Activated CD8-positive, alpha-beta T cell treated with anti-CD3 and anti-CD28 coated beads for 36 hours (primary cell): ENCODE measurements at regions of chr17 and their contacts with region 1.

Region 1: GRCh38 chr17:50139950-50140871 is 10.3 kb upstream of the SAMD14 start:
- DNase-seq: peak; percentile 87
- ATAC-seq: peak; percentile 90
- H3K4me3 Mint-ChIP-seq: no peak overlapping the region
- H3K27ac Mint-ChIP-seq: peak overlapping the region; percentile 61
- H3K4me1 Mint-ChIP-seq: peaks cover 53% of the 10 kb centered on the region
- H3K27me3 Mint-ChIP-seq: no peaks in the 10 kb centered on the region
- CTCF ChIP-seq: peak; percentile 94

Region 2: DNA sequence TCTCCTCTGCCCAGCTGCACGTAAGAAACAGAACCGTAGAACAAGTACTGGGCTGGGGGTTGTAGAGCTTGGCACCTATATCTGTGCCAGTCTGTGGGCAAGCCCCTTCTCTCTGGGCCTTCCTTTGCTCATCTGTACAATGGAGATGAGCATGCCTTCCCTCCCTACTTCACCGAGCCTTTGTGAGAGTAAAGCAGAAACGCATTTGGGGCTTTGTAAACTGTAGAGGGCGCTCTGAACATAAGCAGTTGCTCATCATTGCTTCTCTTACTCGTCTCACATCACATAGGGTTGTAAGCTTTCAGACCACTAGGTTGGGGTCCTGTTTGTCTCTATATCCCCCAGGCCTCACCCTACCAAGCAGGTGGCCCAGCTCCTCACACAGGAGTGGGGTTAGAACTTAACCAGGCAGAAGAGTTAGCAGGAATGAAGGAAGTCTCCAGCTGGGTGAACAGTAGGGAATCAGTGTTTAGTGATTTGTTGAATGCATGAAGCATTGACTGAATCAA is 25.3 kb before region 1 on chr17:
- CTCF ChIA-PET with region 1: interaction called, 29 read pairs
- POLR2A ChIA-PET with region 1: interaction called, 3 read pairs
- intact Hi-C with region 1: no loop called
- DNase-seq: peak; percentile 75
- ATAC-seq: peak; percentile 69
- H3K4me3 Mint-ChIP-seq: no peak overlapping the region
- H3K27ac Mint-ChIP-seq: no peak overlapping the region
- H3K4me1 Mint-ChIP-seq: peaks cover 12% of the 10 kb centered on the region
- H3K27me3 Mint-ChIP-seq: peaks cover 29% of the 10 kb centered on the region
- CTCF ChIP-seq: peak; percentile 63

Region 3: GRCh38 chr17:50129728-50130558 is 10.3 kb before region 1 on chr17 and contains the start of gene SAMD14:
- CTCF ChIA-PET with region 1: interaction called, 23 read pairs
- POLR2A ChIA-PET with region 1: interaction called, 6 read pairs
- intact Hi-C with region 1: no loop called
- DNase-seq: peak; percentile 61
- ATAC-seq: peak; percentile 53
- H3K4me3 Mint-ChIP-seq: peak within 1 kb of the TSS; percentile 58
- H3K27ac Mint-ChIP-seq: peak within 1 kb of the TSS; percentile 62
- H3K4me1 Mint-ChIP-seq: peaks cover 22% of the 10 kb centered on the region
- H3K27me3 Mint-ChIP-seq: peaks cover 23% of the 10 kb centered on the region
- CTCF ChIP-seq: no peak
- total RNA-seq, gene SAMD14: 0.47 to 1.3 TPM

Region 4: DNA sequence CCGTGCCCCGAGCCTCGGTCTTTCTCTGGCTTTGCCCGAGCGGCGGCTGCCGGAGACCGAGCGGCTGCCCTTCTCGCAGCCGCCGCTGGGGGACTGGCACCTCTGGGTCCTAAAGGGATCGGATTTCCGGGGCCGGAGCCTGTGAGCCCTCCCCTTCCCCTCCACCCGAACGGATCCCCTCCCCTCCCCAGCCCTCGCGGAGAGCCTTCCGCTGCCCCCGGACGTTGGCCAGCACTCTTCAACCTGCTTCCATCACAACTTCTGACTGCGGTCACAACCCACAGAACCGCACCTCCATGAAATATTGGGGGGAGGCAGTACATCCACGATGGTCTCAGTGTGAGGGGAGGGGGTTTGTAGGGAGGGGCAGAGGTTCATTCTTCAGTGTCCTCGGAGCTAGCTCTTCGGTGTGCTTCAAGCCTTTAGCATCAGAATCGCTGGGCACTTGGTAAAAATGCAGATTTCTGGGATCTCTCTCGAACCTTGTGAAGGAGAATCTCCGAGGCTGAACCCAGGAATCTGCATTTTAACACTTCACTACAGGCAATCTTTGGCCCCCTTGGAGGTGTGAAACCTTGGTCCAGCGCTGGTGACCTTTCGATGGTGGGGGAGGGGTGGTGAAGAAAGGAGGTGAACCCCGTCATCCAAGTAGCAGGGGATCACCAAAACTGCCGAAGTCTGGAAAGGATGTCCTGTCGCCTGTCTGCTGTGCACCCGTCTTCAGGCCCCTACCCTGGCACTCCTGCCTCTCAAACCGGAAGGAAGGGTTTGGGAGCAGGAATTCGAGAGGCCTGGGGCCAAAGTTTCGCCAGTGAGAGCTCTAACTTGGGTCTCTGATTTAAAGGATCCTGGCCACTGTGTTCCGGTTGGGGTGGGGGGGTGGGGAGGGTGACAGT is 11.1 kb after region 1 on chr17:
- CTCF ChIA-PET with region 1: interaction called, 27 read pairs
- POLR2A ChIA-PET with region 1: interaction called, 15 read pairs
- intact Hi-C with region 1: no loop called
- DNase-seq: peak; percentile 94
- ATAC-seq: peak; percentile 75
- H3K4me3 Mint-ChIP-seq: peak overlapping the region; percentile 82
- H3K27ac Mint-ChIP-seq: peak overlapping the region; percentile 96
- H3K4me1 Mint-ChIP-seq: peaks cover 41% of the 10 kb centered on the region
- H3K27me3 Mint-ChIP-seq: no peaks in the 10 kb centered on the region
- CTCF ChIP-seq: no peak

Region 5: DNA sequence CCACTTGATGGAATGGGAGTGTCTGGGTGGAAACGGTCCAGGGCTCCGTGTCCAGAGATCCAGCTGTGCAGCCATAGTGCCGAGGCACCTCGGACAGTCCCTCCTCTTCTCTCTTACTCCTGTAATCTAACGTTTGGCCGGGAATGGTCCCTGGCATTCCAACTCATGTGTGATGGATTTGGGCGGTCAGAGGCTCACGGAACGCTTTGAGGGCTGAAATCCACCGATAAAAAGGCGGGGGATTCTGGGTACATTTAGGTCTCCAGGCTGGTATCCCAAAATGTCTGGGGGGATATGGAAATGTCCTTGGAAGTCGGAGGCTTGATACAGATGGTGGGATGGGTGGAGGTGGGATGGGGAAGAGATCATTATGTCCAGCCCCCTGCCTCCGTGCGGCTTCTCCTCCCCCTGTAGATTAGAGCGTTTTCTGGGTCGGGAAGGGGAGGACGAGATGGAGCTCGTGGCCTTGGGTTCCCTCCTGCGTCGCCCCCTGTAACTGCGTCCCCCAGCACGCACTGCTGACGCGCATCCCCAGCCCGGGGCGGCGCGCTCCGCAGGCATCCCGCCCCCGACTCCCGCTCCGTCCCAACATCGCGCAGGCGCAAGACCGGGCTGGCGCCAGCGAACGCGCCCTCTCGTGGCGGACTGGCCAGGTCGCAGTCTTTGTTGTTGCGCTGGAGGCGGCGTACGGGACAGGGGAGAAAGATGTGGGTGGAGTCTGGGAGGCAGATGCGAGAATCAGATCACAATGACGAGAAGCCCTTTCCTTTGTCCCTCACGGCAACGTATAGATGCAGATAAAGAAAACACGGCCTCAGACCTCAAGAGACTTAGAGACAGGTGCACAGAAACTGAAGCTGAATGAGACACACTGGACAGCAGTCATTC is 21.1 kb after region 1 on chr17:
- CTCF ChIA-PET with region 1: interaction called, 102 read pairs
- POLR2A ChIA-PET with region 1: interaction called, 5 read pairs
- intact Hi-C with region 1: no loop called
- DNase-seq: peak; percentile 96
- ATAC-seq: peak; percentile 92
- H3K4me3 Mint-ChIP-seq: peak overlapping the region; percentile 65
- H3K27ac Mint-ChIP-seq: peak overlapping the region; percentile 97
- H3K4me1 Mint-ChIP-seq: peaks cover 44% of the 10 kb centered on the region
- H3K27me3 Mint-ChIP-seq: no peaks in the 10 kb centered on the region
- CTCF ChIP-seq: peak; percentile 84